ENCODE measurements at regions of chr5 and their contacts with region 1.

Region 1: GRCh38 chr5:127030259-127031146 is at the start of gene MARCHF3:
- DNase-seq: peak; percentile 94
- H3K4me3 Mint-ChIP-seq: peak within 1 kb of the TSS; percentile 93
- H3K27ac Mint-ChIP-seq: peak within 1 kb of the TSS; percentile 75
- H3K4me1 Mint-ChIP-seq: peaks cover 31% of the 10 kb centered on the region
- H3K27me3 Mint-ChIP-seq: no peaks in the 10 kb centered on the region
- total RNA-seq, gene MARCHF3: 11.8 TPM

Region 2: DNA sequence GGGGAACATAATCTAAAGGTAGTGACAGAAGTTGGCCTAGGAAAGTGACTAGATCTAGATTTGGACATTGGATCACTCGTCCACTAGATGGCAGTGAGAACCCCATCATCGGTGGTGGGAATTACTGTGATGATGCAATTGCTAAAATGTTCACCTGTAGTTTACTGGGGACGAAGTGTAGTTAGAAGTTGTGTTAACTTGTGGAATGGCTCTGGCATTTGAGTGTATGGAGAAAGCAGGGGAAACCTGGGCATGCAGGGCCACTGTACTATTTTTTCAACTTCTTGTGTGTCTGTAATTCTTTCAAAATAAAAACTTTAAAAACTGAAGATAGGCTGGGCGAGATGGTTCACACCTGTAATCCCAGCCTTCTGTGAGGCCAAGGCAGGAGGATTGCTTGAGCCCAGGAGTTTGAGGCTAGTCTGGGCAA is 354.3 kb before region 1 on chr5:
- CTCF ChIA-PET with region 1: no interaction called
- intact Hi-C with region 1: loop called (anchors 1 kb)
- DNase-seq: peak; percentile 85
- H3K4me3 Mint-ChIP-seq: no peak overlapping the region
- H3K27ac Mint-ChIP-seq: peak overlapping the region; percentile 67
- H3K4me1 Mint-ChIP-seq: peaks cover 4% of the 10 kb centered on the region
- H3K27me3 Mint-ChIP-seq: no peaks in the 10 kb centered on the region

Region 3: GRCh38 chr5:126852091-126852571 is 178.4 kb before region 1 on chr5:
- CTCF ChIA-PET with region 1: no interaction called
- intact Hi-C with region 1: loop called (anchors 2 kb)
- DNase-seq: peak; percentile 24
- H3K4me3 Mint-ChIP-seq: no peak overlapping the region
- H3K27ac Mint-ChIP-seq: peak overlapping the region; percentile 81
- H3K4me1 Mint-ChIP-seq: peaks cover 50% of the 10 kb centered on the region
- H3K27me3 Mint-ChIP-seq: no peaks in the 10 kb centered on the region

Region 4: GRCh38 chr5:126988021-126988569 is 42.4 kb before region 1 on chr5:
- CTCF ChIA-PET with region 1: interaction called, 3 read pairs
- intact Hi-C with region 1: loop called (anchors 1 kb)
- DNase-seq: peak; percentile 77
- H3K4me3 Mint-ChIP-seq: peak overlapping the region; percentile 20
- H3K27ac Mint-ChIP-seq: peak overlapping the region; percentile 76
- H3K4me1 Mint-ChIP-seq: peaks cover 51% of the 10 kb centered on the region
- H3K27me3 Mint-ChIP-seq: no peaks in the 10 kb centered on the region

Region 5: GRCh38 chr5:127072861-127073846 is 42.7 kb after region 1 on chr5 and contains the start of gene C5orf63:
- CTCF ChIA-PET with region 1: interaction called, 3 read pairs
- intact Hi-C with region 1: loop called (anchors 1 kb)
- DNase-seq: peak; percentile 82
- H3K4me3 Mint-ChIP-seq: peak within 1 kb of the TSS; percentile 92
- H3K27ac Mint-ChIP-seq: peak within 1 kb of the TSS; percentile 90
- H3K4me1 Mint-ChIP-seq: peaks cover 21% of the 10 kb centered on the region
- H3K27me3 Mint-ChIP-seq: no peaks in the 10 kb centered on the region
- total RNA-seq, gene C5orf63: 9.4 to 11.6 TPM

Region 6: GRCh38 chr5:127586066-127586770 is 555.7 kb after region 1 on chr5:
- CTCF ChIA-PET with region 1: no interaction called
- intact Hi-C with region 1: no loop called
- DNase-seq: no peak
- H3K4me3 Mint-ChIP-seq: no peak overlapping the region
- H3K27ac Mint-ChIP-seq: no peak overlapping the region
- H3K4me1 Mint-ChIP-seq: no peaks in the 10 kb centered on the region
- H3K27me3 Mint-ChIP-seq: peaks cover 13% of the 10 kb centered on the region

Region 7: DNA sequence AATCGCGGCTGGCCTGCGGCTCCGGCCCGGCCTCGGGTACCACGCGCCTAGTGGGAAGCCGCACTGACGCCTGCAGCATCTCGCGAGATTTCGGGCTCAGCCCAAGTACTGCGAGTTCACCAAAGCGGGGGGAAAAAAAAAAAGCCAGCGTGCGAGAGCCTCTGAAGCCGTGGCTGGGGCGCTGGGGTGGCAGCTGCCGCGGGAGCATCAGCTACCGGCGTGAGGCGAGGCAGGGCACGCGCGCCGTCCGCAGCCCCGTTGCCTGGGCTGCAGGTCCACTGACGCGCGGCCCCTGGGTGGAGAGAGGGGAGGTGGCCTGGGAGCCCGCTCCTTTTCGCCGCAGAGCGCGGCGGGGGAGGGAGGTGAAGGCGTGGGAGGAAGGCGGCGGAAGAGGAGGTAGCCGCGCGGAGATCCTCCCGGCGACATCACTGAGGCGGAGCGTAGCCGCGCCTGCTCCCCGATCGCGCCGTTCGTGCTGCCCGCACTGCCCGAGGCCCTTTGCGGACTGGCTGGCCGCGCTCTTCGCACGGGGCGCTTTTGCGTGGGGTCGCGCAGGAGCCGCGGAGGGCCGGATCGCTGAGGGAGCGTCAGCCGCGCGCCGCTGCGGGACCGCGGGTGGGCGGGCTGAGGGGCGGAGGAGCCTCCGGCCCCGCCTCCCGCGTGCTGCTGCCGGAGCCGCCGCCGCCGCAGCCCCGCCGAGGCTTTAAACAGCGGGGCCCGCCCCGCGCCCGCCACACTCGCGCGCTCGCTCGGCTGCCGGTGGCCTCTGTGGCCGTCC is 1052.7 kb after region 1 on chr5 and contains the start of gene SLC12A2:
- CTCF ChIA-PET with region 1: no interaction called
- intact Hi-C with region 1: loop called (anchors 2 kb)
- DNase-seq: peak; percentile 90
- H3K4me3 Mint-ChIP-seq: peak within 1 kb of the TSS; percentile 93
- H3K27ac Mint-ChIP-seq: peak within 1 kb of the TSS; percentile 96
- H3K4me1 Mint-ChIP-seq: peaks cover 47% of the 10 kb centered on the region
- H3K27me3 Mint-ChIP-seq: no peaks in the 10 kb centered on the region
- total RNA-seq, gene SLC12A2: 5.3 to 6.8 TPM